A673 (cell line): ENCODE measurements at regions of chr16 and their contacts with region 1.

Region 1: GRCh38 chr16:75206749-75207451 is at the start of gene CTRB2:
- DNase-seq: no peak
- H3K4me3 ChIP-seq: no peak within 1 kb of the TSS
- H3K27ac ChIP-seq: no peak within 1 kb of the TSS
- H3K4me1 ChIP-seq: no peaks in the 10 kb centered on the region
- H3K27me3 ChIP-seq: no peaks in the 10 kb centered on the region
- CTCF ChIP-seq: no peak
- total RNA-seq, gene CTRB2: not detected in 2 replicates

Region 2: GRCh38 chr16:75181630-75182029 is 25.3 kb before region 1 on chr16:
- CTCF ChIA-PET with region 1: no interaction called
- POLR2A ChIA-PET with region 1: no interaction called
- intact Hi-C with region 1: no loop called
- DNase-seq: no peak
- H3K4me3 ChIP-seq: no peak overlapping the region
- H3K27ac ChIP-seq: no peak overlapping the region
- H3K4me1 ChIP-seq: no peaks in the 10 kb centered on the region
- H3K27me3 ChIP-seq: no peaks in the 10 kb centered on the region
- CTCF ChIP-seq: no peak

Region 3: GRCh38 chr16:75224306-75225091 is 17.6 kb after region 1 on chr16:
- CTCF ChIA-PET with region 1: no interaction called
- POLR2A ChIA-PET with region 1: no interaction called
- intact Hi-C with region 1: loop called (anchors 2 kb)
- DNase-seq: no peak
- H3K4me3 ChIP-seq: no peak overlapping the region
- H3K27ac ChIP-seq: no peak overlapping the region
- H3K4me1 ChIP-seq: no peaks in the 10 kb centered on the region
- H3K27me3 ChIP-seq: no peaks in the 10 kb centered on the region
- CTCF ChIP-seq: no peak